OCI-LY7 (cell line): ENCODE measurements at regions of chr1 and their contacts with region 1.

Region 1: GRCh38 chr1:175373786-175374623 is 181.4 kb upstream of the KIAA0040 start:
- DNase-seq: peak; percentile 57
- H3K4me3 ChIP-seq: no peak overlapping the region
- H3K27ac ChIP-seq: no peak overlapping the region
- H3K4me1 ChIP-seq: no peaks in the 10 kb centered on the region
- CTCF ChIP-seq: peak; percentile 89

Region 2: GRCh38 chr1:175434283-175434860 is 60.4 kb after region 1 on chr1:
- CTCF ChIA-PET with region 1: no interaction called
- POLR2A ChIA-PET with region 1: no interaction called
- intact Hi-C with region 1: loop called (anchors 10 kb)
- DNase-seq: peak; percentile 27
- H3K4me3 ChIP-seq: no peak overlapping the region
- H3K27ac ChIP-seq: no peak overlapping the region
- H3K4me1 ChIP-seq: no peaks in the 10 kb centered on the region
- CTCF ChIP-seq: peak; percentile 91

Region 3: GRCh38 chr1:175471039-175471800 is 97.2 kb after region 1 on chr1:
- CTCF ChIA-PET with region 1: no interaction called
- POLR2A ChIA-PET with region 1: no interaction called
- intact Hi-C with region 1: no loop called
- DNase-seq: no peak
- H3K4me3 ChIP-seq: no peak overlapping the region
- H3K27ac ChIP-seq: no peak overlapping the region
- H3K4me1 ChIP-seq: no peaks in the 10 kb centered on the region
- CTCF ChIP-seq: no peak

Region 4: GRCh38 chr1:175757381-175758015 is 383.5 kb after region 1 on chr1:
- CTCF ChIA-PET with region 1: no interaction called
- POLR2A ChIA-PET with region 1: no interaction called
- intact Hi-C with region 1: loop called (anchors 10 kb)
- DNase-seq: peak; percentile 63
- H3K4me3 ChIP-seq: no peak overlapping the region
- H3K27ac ChIP-seq: no peak overlapping the region
- H3K4me1 ChIP-seq: no peaks in the 10 kb centered on the region
- CTCF ChIP-seq: peak; percentile 98

Region 5: GRCh38 chr1:176073524-176074157 is 699.6 kb after region 1 on chr1:
- CTCF ChIA-PET with region 1: no interaction called
- POLR2A ChIA-PET with region 1: no interaction called
- intact Hi-C with region 1: loop called (anchors 5 kb)
- DNase-seq: peak; percentile 77
- H3K4me3 ChIP-seq: no peak overlapping the region
- H3K27ac ChIP-seq: no peak overlapping the region
- H3K4me1 ChIP-seq: no peaks in the 10 kb centered on the region
- CTCF ChIP-seq: peak; percentile 90